ENCODE measurements at regions of chr9 and their contacts with region 1.

Region 1: GRCh38 chr9:113669522-113670115 is 206.1 kb downstream of the RGS3 start:
- DNase-seq: no peak
- H3K4me3 ChIP-seq: no peak overlapping the region
- H3K27ac ChIP-seq: no peak overlapping the region
- H3K4me1 ChIP-seq: peaks cover 0 to 5% of the 10 kb centered on the region in 2 donors
- H3K27me3 ChIP-seq: no peaks in the 10 kb centered on the region
- CTCF ChIP-seq: no peak

Region 2: GRCh38 chr9:113431191-113431590 is 238.4 kb before region 1 on chr9:
- intact Hi-C with region 1: loop called (anchors 5 kb)
- DNase-seq: no peak
- H3K4me3 ChIP-seq: no peak overlapping the region
- H3K27ac ChIP-seq: no peak overlapping the region
- H3K4me1 ChIP-seq: no peaks in the 10 kb centered on the region
- H3K27me3 ChIP-seq: no peaks in the 10 kb centered on the region
- CTCF ChIP-seq: no peak

Region 3: DNA sequence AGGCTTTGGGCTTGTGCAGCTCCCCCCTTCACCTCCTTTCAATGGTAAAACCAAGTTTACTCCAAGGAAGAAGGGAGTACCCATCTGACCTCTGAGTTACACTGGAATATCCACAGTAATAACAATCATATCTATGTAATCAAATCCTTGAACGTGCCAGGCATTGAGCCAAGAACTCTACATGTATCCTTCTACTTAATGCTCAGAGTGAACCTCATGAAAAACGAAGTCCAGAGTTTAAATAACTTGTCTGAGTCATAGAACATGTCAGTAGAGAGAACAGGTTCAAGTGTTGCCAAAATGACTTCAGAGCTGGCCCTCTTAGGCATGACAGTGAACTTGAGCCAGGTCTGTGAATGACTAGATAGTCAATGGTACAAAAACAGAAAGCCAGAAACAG is 42.4 kb after region 1 on chr9:
- intact Hi-C with region 1: no loop called
- DNase-seq: peak in 1 of 2 donors; percentile 4
- H3K4me3 ChIP-seq: no peak overlapping the region
- H3K27ac ChIP-seq: no peak overlapping the region
- H3K4me1 ChIP-seq: no peaks in the 10 kb centered on the region
- H3K27me3 ChIP-seq: no peaks in the 10 kb centered on the region
- CTCF ChIP-seq: no peak

Region 4: GRCh38 chr9:113853324-113853723 is 183.7 kb after region 1 on chr9:
- intact Hi-C with region 1: no loop called
- DNase-seq: no peak
- H3K4me3 ChIP-seq: no peak overlapping the region
- H3K27ac ChIP-seq: no peak overlapping the region
- H3K4me1 ChIP-seq: no peaks in the 10 kb centered on the region
- H3K27me3 ChIP-seq: no peaks in the 10 kb centered on the region
- CTCF ChIP-seq: peak in 1 of 3 experiments; percentile 27